IMR-90 (cell line): ENCODE measurements at regions of chr6 and their contacts with region 1.

Region 1: GRCh38 chr6:56757588-56757984 is 114.9 kb upstream of the DST start:
- DNase-seq: peak; percentile 71
- ATAC-seq: peak; percentile 52
- H3K4me3 ChIP-seq: no peak overlapping the region
- H3K27ac ChIP-seq: peak overlapping the region; percentile 95
- H3K4me1 ChIP-seq: peaks cover 22% of the 10 kb centered on the region
- H3K27me3 ChIP-seq: no peaks in the 10 kb centered on the region
- CTCF ChIP-seq: peak; percentile 58
- POLR2A ChIP-seq: no peak
- RAD21 ChIP-seq: peak; percentile 66

Region 2: DNA sequence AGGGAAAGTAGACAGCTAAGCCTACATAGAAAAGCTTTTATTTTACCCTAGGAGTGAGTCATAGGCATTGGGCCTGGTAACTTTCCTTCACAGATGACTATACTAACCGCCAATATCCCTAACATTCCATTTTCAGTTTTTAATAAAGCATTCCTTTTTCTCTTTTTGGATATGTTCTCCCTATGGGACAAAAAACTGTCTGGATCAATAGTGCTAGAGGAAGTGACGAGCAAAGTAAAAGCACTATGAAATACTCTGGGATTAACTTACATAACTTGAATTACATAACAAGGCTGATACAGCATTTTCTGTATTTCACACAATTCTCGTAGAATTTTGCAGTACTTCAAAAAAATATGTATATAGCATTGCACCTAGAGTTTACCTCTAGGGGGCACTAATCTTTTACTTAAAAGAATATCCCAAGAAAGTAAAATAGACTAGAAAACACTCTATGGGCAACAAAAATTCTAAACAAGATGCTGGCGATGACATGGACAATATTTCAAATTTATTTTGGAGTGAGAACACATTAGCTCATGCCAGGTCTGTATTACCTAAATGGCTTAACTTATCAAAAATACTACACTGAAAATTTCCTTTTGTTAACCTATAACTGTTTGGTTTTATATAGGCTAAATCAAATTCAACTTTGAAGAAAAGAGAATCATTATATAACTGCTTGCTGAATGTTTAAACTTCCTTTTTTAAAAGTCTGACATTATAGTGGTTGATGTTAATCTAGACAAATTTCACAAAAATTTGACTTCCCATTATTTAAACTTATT is 48.6 kb before region 1 on chr6:
- CTCF ChIA-PET with region 1: interaction called, 8 read pairs
- POLR2A ChIA-PET with region 1: no interaction called
- dilution Hi-C with region 1: no loop called
- in situ Hi-C with region 1: no loop called
- intact Hi-C with region 1: loop called (anchors 2 kb)
- DNase-seq: peak; percentile 76
- ATAC-seq: peak; percentile 48
- H3K4me3 ChIP-seq: no peak overlapping the region; the same call in 1 of the 2 replicates
- H3K27ac ChIP-seq: no peak overlapping the region
- H3K4me1 ChIP-seq: peaks cover 17% of the 10 kb centered on the region
- H3K27me3 ChIP-seq: no peaks in the 10 kb centered on the region
- CTCF ChIP-seq: peak; percentile 54
- POLR2A ChIP-seq: no peak
- RAD21 ChIP-seq: peak; percentile 41